Transverse colon (tissue), 4 donors: ENCODE measurements at regions of chr22 and their contacts with region 1.

Region 1: GRCh38 chr22:30947816-30948454 is 20.6 kb downstream of the MORC2 start:
- DNase-seq: no peak
- H3K4me3 ChIP-seq: no peak overlapping the region
- H3K27ac ChIP-seq: peak overlapping the region; percentile 31 to 53 (median 44)
- H3K4me1 ChIP-seq: peaks cover 0 to 16% (median 8%) of the 10 kb centered on the region in 4 donors
- H3K27me3 ChIP-seq: no peaks in the 10 kb centered on the region
- CTCF ChIP-seq: peak; percentile 52 to 71 (median 62)
- EP300 ChIP-seq: no peak
- POLR2A ChIP-seq: no peak

Region 2: DNA sequence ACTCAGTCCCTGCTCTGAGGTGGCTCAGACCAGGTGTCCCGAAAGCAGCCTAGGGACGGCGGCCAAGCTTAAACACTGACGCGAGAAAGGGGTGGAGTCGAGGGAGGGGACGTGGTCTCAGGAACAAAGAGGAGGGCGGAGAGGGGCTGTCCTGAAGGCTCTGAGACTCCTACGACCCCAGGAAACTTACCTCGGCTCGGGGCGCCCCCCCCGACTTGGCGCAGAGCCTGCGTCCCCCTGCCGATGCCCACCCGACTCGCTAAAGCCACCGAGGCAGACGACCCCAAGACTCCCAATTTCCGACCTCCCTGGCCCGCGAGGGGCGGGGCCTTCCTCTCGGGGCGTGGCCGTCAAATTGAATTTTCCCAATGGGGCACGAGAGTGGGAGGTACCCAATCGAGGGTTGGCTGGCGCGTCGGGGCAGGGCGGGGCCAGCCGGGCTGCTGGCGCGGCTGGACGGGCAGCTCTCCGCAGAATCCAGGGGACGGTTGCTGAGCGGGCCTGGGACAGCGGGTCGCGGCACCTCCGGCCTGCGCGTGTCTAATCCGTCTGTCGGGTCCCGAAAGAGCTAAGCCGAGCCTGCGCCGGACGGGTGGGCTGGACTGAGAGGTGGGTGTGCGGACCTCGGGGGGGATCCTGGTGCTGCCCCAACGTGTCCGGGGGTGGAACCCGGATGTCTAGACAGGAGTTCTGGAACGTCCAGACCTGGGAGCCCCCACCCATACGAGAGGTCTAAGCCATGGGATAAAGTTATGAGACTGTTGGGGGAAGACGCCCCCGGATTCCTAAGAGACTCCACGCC is 133.1 kb after region 1 on chr22 and contains the start of gene SMTN:
- in situ Hi-C with region 1: loop called in 3 of 4 experiments (anchors 10 kb)
- intact Hi-C with region 1: loop called (anchors 2 kb)
- DNase-seq: peak; percentile 97
- H3K4me3 ChIP-seq: peak within 1 kb of the TSS; percentile 57 to 71 (median 69)
- H3K27ac ChIP-seq: peak within 1 kb of the TSS; percentile 90 to 97 (median 96)
- H3K4me1 ChIP-seq: peaks cover 31 to 73% (median 58%) of the 10 kb centered on the region in 4 donors
- H3K27me3 ChIP-seq: no peaks in the 10 kb centered on the region
- CTCF ChIP-seq: no peak
- EP300 ChIP-seq: no peak
- POLR2A ChIP-seq: peak; percentile 98
- total RNA-seq, gene SMTN: 171 to 341 (median 219) TPM

Region 3: DNA sequence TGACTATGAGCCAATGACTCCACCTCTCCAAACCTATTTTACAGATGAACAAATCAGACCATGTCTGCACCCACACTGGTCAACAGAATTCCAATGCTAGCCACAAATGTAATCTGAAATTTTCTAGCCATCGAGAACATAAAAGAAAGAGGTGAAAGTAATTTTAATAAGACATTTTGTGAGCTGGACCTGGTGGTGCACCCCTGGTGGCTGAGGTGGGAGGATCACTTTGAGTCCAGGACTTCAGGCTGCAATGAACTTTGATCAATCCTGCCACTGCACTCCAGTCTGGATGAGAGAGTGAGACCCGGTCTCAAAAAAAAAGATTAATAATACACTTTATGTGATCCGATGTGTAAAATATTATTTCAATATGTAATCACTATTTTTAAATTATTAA is 202.7 kb after region 1 on chr22:
- in situ Hi-C with region 1: no loop called
- intact Hi-C with region 1: loop called (anchors 5 kb)
- DNase-seq: no peak
- H3K4me3 ChIP-seq: no peak overlapping the region
- H3K27ac ChIP-seq: no peak overlapping the region
- H3K4me1 ChIP-seq: peaks cover 0 to 16% (median 3%) of the 10 kb centered on the region in 4 donors
- H3K27me3 ChIP-seq: no peaks in the 10 kb centered on the region
- CTCF ChIP-seq: peak; percentile 26 to 48 (median 32)
- EP300 ChIP-seq: no peak
- POLR2A ChIP-seq: no peak